ENCODE measurements at regions of chr10 and their contacts with region 1.

Region 1: DNA sequence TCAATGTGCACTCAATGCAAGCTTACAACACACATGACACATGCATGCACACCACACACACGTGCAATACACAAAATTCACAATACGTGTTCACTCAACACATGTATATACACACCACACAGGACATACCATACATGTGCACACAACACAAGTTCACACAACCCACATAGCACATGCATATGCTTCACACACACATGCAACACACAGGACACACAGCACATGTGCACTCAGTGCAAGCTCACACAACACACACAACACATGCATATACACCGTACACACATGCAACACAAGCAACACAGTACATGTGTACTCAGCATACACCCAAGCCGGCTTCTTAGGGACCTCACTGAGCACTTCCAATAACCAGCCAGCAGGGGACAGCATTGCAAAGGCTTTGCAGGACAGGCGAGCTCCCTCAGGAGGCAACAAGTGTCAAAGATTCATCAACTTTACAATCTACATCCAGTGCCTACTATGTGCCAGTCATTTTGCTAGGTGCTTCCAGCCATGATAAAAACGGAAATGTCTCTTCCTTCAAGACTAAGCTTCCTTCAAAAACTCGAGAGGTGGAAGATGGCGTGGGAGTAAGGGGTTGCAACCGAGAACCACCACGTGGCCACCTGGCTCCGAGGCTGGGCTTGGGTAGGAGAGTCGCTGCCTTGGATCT is 61.1 kb downstream of the JCAD start:
- DNase-seq: peak; percentile 94
- H3K4me3 Mint-ChIP-seq: no peak overlapping the region
- H3K27ac Mint-ChIP-seq: peak overlapping the region; percentile 20
- H3K4me1 Mint-ChIP-seq: peaks cover 8% of the 10 kb centered on the region
- H3K27me3 Mint-ChIP-seq: peaks cover 36% of the 10 kb centered on the region

Region 2: DNA sequence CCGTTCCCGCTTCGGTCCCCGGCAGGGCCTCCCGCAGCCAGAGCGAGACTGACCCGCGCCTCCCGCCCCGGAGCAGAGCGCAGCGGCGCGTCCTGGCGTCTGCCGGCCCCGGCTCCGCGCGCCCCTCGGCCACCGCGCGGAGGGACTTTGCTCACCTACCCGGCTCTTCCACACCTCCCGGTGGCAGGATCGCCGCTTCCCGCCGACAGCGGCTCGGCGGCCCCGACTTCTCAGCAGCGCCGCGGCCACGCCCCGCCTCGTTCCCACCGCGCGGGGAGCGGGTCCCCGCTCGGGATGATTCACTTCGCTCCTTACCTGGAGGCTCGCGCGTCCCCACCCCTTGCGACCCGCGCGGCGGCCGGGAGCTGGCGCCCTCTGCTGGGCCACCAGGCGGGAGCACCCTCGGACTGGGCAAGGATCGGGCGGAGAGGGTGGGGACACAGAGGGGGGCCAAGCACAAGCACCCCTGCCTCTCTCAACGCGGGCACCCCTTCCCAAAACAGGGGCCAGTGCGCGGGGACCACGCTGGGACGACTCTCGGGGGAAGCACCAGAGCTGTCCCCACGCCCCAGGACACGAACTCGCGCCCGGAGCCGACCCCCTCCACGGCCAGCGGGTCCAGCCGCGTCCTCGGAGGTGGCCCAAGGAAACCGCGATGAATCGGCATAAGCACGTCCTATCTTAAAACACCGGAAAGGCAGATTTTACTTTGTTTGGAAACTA is 262.5 kb before region 1 on chr10:
- intact Hi-C with region 1: no loop called
- DNase-seq: peak; percentile 95
- H3K4me3 Mint-ChIP-seq: peak overlapping the region; percentile 85
- H3K27ac Mint-ChIP-seq: peak overlapping the region; percentile 85
- H3K4me1 Mint-ChIP-seq: peaks cover 11% of the 10 kb centered on the region
- H3K27me3 Mint-ChIP-seq: peaks cover 39% of the 10 kb centered on the region

Region 3: DNA sequence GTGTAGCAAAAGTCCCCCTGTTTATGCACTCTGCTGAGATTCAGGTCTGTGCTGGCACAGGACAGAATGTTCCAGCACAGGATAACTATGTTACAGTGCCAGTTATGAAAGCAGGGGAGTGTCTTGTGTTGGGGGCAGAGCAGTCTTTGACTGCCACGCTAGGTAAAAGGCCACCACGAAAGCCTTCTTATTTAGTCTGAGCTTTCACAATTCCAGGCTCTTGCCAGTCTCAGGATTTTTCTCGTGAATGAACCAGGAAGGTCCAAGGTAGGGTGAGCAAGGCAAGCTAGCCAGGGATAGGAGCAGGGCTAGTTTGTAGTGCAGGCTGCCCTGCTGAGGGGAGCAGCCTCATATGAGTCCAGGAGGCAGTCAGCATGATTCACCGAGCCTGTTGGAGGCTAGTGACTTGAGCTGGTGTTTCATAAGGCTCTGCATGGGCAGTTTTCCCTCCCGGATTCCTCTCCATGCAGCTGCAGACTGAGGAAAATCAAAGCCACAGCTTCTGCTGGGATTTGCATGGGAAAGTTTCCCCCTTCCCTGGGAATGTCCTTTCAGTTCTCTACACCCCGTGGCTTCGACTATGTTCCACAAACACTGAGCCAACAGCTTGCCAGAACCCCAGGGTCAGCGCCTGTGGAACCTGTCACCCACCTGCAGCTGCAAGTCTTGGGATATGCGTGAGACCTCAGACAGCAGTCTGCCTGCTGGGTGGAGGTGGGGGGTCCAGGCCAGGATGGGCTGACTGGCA is 51.1 kb before region 1 on chr10:
- intact Hi-C with region 1: no loop called
- DNase-seq: no peak
- H3K4me3 Mint-ChIP-seq: no peak overlapping the region
- H3K27ac Mint-ChIP-seq: no peak overlapping the region
- H3K4me1 Mint-ChIP-seq: peaks cover 3% of the 10 kb centered on the region
- H3K27me3 Mint-ChIP-seq: peaks cover 2% of the 10 kb centered on the region

Region 4: GRCh38 chr10:30059209-30060107 is 61.2 kb after region 1 on chr10 and contains the start of gene JCAD:
- intact Hi-C with region 1: loop called (anchors 10 kb)
- DNase-seq: peak; percentile 87
- H3K4me3 Mint-ChIP-seq: peak within 1 kb of the TSS; percentile 72
- H3K27ac Mint-ChIP-seq: no peak within 1 kb of the TSS
- H3K4me1 Mint-ChIP-seq: peaks cover 4% of the 10 kb centered on the region
- H3K27me3 Mint-ChIP-seq: peaks cover 83% of the 10 kb centered on the region
- total RNA-seq, gene JCAD: 0.19 and 0.21 TPM in 2 replicates

Region 5: GRCh38 chr10:30241422-30242110 is 243.3 kb after region 1 on chr10:
- intact Hi-C with region 1: loop called (anchors 1 kb)
- DNase-seq: no peak
- H3K4me3 Mint-ChIP-seq: no peak overlapping the region
- H3K27ac Mint-ChIP-seq: no peak overlapping the region
- H3K4me1 Mint-ChIP-seq: peaks cover 5% of the 10 kb centered on the region
- H3K27me3 Mint-ChIP-seq: peaks cover 11% of the 10 kb centered on the region

Region 6: GRCh38 chr10:30583778-30584415 is 585.6 kb after region 1 on chr10:
- intact Hi-C with region 1: no loop called
- DNase-seq: peak; percentile 69
- H3K4me3 Mint-ChIP-seq: peak overlapping the region; percentile 64
- H3K27ac Mint-ChIP-seq: peak overlapping the region; percentile 58
- H3K4me1 Mint-ChIP-seq: peaks cover 5% of the 10 kb centered on the region
- H3K27me3 Mint-ChIP-seq: peaks cover 17% of the 10 kb centered on the region

Measured in activated CD4-positive, alpha-beta T cell treated with anti-CD3 and anti-CD28 coated beads, Interleukin-2, amount 10 ng/mL, durations not matched to agents 24 days and 14 days (primary cell).